Upper lobe of right lung (tissue), 1 donor: ENCODE measurements at regions of chr5 and their contacts with region 1.

Region 1: DNA sequence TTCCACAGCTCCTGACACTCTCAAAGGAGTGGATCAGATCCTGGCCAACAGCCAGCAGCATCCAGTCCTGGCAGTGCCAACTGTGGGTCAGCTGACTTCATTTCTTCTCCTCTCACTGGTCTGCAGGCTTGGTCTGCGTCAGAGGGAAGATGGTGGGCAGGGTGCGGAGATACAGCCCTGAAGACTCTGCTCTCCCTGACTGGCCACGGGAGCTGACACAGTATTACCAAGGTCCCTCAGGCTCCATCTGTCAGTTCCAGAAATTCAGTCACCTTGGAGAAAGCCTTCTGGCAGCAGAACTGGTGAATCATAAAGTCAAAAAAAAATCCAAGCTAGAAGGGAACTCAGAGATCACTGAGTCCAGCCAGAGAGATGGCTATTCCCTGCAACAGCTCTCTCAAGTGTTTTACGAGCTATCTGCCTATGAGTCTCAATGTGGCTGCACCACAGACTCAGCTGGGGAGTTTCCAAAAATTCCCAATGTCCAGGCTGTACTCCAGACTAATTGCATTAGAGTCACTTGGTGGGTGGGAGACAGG is 28.0 kb downstream of the C1QTNF2 start:
- DNase-seq: no peak
- ATAC-seq: no peak
- H3K4me3 ChIP-seq: no peak overlapping the region
- H3K27ac ChIP-seq: no peak overlapping the region
- H3K4me1 ChIP-seq: peaks cover 4% of the 10 kb centered on the region
- H3K27me3 ChIP-seq: no peaks in the 10 kb centered on the region
- CTCF ChIP-seq: no peak

Region 2: GRCh38 chr5:160199410-160199911 is 143.0 kb before region 1 on chr5:
- intact Hi-C with region 1: loop called (anchors 5 kb)
- DNase-seq: peak; percentile 87
- ATAC-seq: peak; percentile 98
- H3K4me3 ChIP-seq: peak overlapping the region; percentile 46
- H3K27ac ChIP-seq: no peak overlapping the region
- H3K4me1 ChIP-seq: peaks cover 11% of the 10 kb centered on the region
- H3K27me3 ChIP-seq: no peaks in the 10 kb centered on the region
- CTCF ChIP-seq: peak; percentile 97